ENCODE measurements at regions of chr7 and their contacts with region 1.

Region 1: GRCh38 chr7:77409739-77410547 is 6.2 kb downstream of the GSAP start:
- DNase-seq: peak in 3 of 14 experiments; percentile 22 to 65 (median 52)
- ATAC-seq: no peak
- H3K4me3 ChIP-seq: no peak overlapping the region
- H3K4me3 Mint-ChIP-seq: no peak overlapping the region
- H3K27ac ChIP-seq: peak overlapping the region in 1 of 2 donors; percentile 32
- H3K27ac Mint-ChIP-seq: no peak overlapping the region
- H3K4me1 ChIP-seq: peaks cover 6% of the 10 kb centered on the region
- H3K4me1 Mint-ChIP-seq: peaks cover 37% of the 10 kb centered on the region
- H3K27me3 ChIP-seq: no peaks in the 10 kb centered on the region
- H3K27me3 Mint-ChIP-seq: no peaks in the 10 kb centered on the region
- CTCF ChIP-seq: no peak

Region 2: DNA sequence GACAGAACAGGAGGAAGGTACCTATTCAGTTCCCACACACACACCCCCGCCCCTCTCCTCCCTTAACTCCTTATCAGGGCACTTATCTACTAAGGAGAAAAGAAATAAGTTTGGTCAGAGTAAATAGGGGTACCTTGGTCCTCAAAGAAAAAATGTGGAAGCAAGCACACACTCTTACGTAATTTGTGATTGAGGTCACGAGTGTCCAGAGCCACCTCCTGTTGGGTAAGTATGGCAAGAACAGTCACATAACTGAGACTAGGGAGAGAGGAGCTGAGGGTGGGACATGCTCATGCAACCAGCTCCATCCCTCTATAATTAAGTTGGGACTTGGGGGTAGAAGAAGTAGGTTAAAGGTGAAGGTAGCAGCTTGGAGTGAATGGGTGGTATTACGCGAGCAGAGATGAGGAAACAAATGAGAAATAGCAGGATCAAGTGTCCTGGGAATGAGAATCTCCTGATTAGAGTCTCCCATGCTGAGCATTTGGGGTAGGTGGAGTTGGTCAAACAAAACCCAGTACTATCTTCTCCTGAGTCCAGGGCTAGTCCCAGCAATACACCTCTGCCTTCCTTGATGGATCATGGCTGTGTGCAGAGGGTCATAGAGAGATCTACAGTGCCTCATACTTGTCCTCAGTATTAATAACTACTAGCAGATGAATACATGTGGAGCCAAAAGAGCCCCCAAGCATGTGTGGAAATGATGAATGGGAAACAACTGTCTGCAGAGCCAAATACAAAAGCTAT is 70.9 kb before region 1 on chr7:
- CTCF ChIA-PET with region 1: no interaction called
- POLR2A ChIA-PET with region 1: no interaction called
- intact Hi-C with region 1: no loop called
- DNase-seq: peak in 1 of 14 experiments; percentile 45
- ATAC-seq: no peak
- H3K4me3 ChIP-seq: no peak overlapping the region
- H3K4me3 Mint-ChIP-seq: no peak overlapping the region
- H3K27ac ChIP-seq: no peak overlapping the region
- H3K27ac Mint-ChIP-seq: no peak overlapping the region
- H3K4me1 ChIP-seq: peaks cover 15% of the 10 kb centered on the region
- H3K4me1 Mint-ChIP-seq: peaks cover 37% of the 10 kb centered on the region
- H3K27me3 ChIP-seq: no peaks in the 10 kb centered on the region
- H3K27me3 Mint-ChIP-seq: no peaks in the 10 kb centered on the region
- CTCF ChIP-seq: no peak

Region 3: DNA sequence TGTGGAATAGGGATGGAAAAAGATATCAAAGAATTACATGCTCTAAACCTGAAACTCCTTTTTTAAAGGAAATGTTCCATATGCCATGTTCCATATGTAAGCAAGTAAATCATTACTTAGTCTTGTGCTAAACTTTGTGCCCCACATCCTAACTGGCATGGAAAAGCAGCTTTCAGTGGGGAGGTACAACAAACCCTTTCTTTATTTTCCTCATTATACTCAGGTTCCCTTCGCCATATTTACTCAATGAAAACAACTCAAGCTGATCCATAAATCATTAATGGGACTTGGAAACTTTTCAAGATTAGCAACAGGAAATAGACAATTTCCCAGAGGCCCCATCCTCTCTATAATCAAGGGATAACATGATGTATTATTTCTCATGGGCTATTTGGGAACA is 49.8 kb before region 1 on chr7:
- CTCF ChIA-PET with region 1: interaction called, 3 read pairs
- POLR2A ChIA-PET with region 1: interaction called, 14 read pairs
- intact Hi-C with region 1: loop called in 1 of 2 experiments (anchors 5 kb)
- DNase-seq: no peak
- ATAC-seq: no peak
- H3K4me3 ChIP-seq: no peak overlapping the region
- H3K4me3 Mint-ChIP-seq: no peak overlapping the region
- H3K27ac ChIP-seq: no peak overlapping the region
- H3K27ac Mint-ChIP-seq: no peak overlapping the region
- H3K4me1 ChIP-seq: peaks cover 1% of the 10 kb centered on the region
- H3K4me1 Mint-ChIP-seq: peaks cover 12% of the 10 kb centered on the region
- H3K27me3 ChIP-seq: no peaks in the 10 kb centered on the region
- H3K27me3 Mint-ChIP-seq: no peaks in the 10 kb centered on the region
- CTCF ChIP-seq: no peak

Region 4: GRCh38 chr7:77460057-77460486 is 50.1 kb after region 1 on chr7:
- CTCF ChIA-PET with region 1: no interaction called
- POLR2A ChIA-PET with region 1: no interaction called
- intact Hi-C with region 1: no loop called
- DNase-seq: peak in 1 of 14 experiments; percentile 5
- ATAC-seq: no peak
- H3K4me3 ChIP-seq: no peak overlapping the region
- H3K4me3 Mint-ChIP-seq: no peak overlapping the region
- H3K27ac ChIP-seq: no peak overlapping the region
- H3K27ac Mint-ChIP-seq: no peak overlapping the region
- H3K4me1 ChIP-seq: no peaks in the 10 kb centered on the region
- H3K4me1 Mint-ChIP-seq: no peaks in the 10 kb centered on the region
- H3K27me3 ChIP-seq: no peaks in the 10 kb centered on the region
- H3K27me3 Mint-ChIP-seq: no peaks in the 10 kb centered on the region
- CTCF ChIP-seq: no peak

Measured in CD4-positive, alpha-beta T cell (primary cell).